CD8-positive, alpha-beta T cell (primary cell): ENCODE measurements at regions of chr6 and their contacts with region 1.

Region 1: GRCh38 chr6:3977875-3978711 is 100.8 kb downstream of the FAM217A start:
- DNase-seq: peak; percentile 10 to 78 (median 44)
- ATAC-seq: peak; percentile 99
- H3K4me3 ChIP-seq: peak overlapping the region in 1 of 2 experiments; percentile 6
- H3K4me3 Mint-ChIP-seq: peak overlapping the region; percentile 47
- H3K27ac ChIP-seq: no peak overlapping the region
- H3K27ac Mint-ChIP-seq: no peak overlapping the region
- H3K4me1 ChIP-seq: peaks cover 7% of the 10 kb centered on the region
- H3K4me1 Mint-ChIP-seq: peaks cover 11% of the 10 kb centered on the region
- H3K27me3 ChIP-seq: no peaks in the 10 kb centered on the region
- H3K27me3 Mint-ChIP-seq: no peaks in the 10 kb centered on the region
- CTCF ChIP-seq: peak; percentile 64

Region 2: GRCh38 chr6:3748208-3749066 is 229.7 kb before region 1 on chr6:
- CTCF ChIA-PET with region 1: interaction called, 38 read pairs
- POLR2A ChIA-PET with region 1: no interaction called
- intact Hi-C with region 1: no loop called
- DNase-seq: peak in 3 of 9 experiments; percentile 36 to 45 (median 37)
- ATAC-seq: no peak
- H3K4me3 ChIP-seq: no peak overlapping the region
- H3K4me3 Mint-ChIP-seq: no peak overlapping the region
- H3K27ac ChIP-seq: no peak overlapping the region
- H3K27ac Mint-ChIP-seq: no peak overlapping the region
- H3K4me1 ChIP-seq: peaks cover 4% of the 10 kb centered on the region
- H3K4me1 Mint-ChIP-seq: peaks cover 9% of the 10 kb centered on the region
- H3K27me3 ChIP-seq: peaks cover 11 to 21% of the 10 kb centered on the region in 2 experiments
- H3K27me3 Mint-ChIP-seq: peaks cover 32% of the 10 kb centered on the region
- CTCF ChIP-seq: peak; percentile 25

Region 3: DNA sequence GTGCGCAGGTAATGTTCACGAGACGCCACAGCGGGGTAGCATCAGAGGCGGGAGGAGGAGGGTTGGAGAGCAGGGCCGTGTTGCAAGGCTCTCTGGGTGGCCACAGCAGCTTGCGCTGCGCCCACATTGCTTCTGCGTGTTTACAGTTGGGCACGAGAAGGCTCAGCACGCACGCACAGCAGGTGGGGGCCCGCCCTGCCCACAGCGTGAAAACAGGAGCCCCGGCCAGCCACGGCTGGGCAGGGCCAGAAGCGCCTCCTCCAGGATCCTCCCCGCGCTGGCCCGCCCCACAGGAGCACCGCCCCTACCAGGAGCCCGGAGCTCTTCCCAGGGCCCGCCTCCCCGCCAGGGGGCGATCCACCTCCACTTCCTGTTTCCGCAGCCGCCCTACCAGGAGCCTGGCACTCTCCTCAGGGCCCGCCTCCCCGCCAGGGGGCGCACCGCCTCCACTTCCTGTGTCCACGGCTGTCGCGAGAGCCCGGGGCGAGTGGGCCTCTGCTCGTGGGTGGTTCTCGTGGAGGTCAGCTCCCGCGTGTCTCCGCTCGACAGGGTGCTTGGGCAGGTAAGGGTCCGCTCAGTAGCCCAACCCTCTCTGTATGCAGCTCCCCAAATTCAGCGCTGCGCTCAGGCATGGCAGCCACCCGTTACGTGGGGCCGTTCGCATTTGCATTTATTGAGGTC is 129.0 kb before region 1 on chr6 and contains the start of gene FAM50B:
- CTCF ChIA-PET with region 1: interaction called, 18 read pairs
- POLR2A ChIA-PET with region 1: no interaction called
- intact Hi-C with region 1: loop called (anchors 1 to 2 kb)
- DNase-seq: peak; percentile 81 to 94 (median 90)
- ATAC-seq: peak; percentile 95
- H3K4me3 ChIP-seq: peak within 1 kb of the TSS; percentile 54 to 63
- H3K4me3 Mint-ChIP-seq: peak within 1 kb of the TSS; percentile 80
- H3K27ac ChIP-seq: peak within 1 kb of the TSS; percentile 47 to 56
- H3K27ac Mint-ChIP-seq: peak within 1 kb of the TSS; percentile 84
- H3K4me1 ChIP-seq: peaks cover 6% of the 10 kb centered on the region
- H3K4me1 Mint-ChIP-seq: peaks cover 18% of the 10 kb centered on the region
- H3K27me3 ChIP-seq: no peaks in the 10 kb centered on the region
- H3K27me3 Mint-ChIP-seq: no peaks in the 10 kb centered on the region
- CTCF ChIP-seq: peak; percentile 75
- total RNA-seq, gene FAM50B: 0.97 to 1.1 TPM

Region 4: DNA sequence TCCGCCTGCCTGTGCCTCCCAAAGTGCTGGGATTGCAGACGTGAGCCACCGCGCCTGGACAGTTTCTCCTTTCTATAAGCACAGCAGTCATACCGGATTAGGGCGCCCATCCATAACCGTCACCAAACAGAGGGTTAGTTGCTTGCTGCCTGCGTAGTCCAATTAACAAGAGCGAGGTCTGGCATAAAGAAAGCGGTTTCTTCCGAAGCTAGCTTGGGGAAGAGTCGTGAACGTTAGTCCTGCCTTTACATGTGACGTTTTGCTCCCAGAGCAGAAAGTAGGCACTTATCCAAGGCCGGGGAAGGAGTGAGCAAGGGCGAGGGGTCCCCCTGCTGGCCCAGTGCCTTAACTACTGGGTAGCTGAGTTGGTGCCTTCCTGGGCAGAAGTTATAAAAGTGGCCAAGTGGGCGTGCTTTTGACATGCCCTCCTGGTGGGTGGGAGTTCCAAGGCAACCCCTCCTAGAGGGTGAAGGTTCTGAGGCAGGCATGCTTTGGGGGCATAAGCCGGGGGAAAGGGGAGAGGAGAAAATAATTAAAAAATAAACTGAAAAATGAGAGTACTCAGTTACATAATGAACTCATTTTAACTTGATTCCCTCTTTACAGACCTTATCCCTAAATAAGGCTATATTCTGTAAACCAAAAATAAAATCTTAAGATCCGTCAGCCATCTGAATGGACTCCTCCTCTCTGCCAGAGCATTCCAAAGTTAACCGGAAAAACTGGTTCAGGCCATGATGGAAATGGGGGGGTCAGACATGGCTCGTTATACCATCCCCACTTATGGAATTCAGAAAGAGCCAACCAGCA is 12.8 kb after region 1 on chr6:
- CTCF ChIA-PET with region 1: interaction called, 20 read pairs
- POLR2A ChIA-PET with region 1: no interaction called
- intact Hi-C with region 1: no loop called
- DNase-seq: peak; percentile 42 to 75 (median 71)
- ATAC-seq: peak; percentile 98
- H3K4me3 ChIP-seq: no peak overlapping the region
- H3K4me3 Mint-ChIP-seq: no peak overlapping the region
- H3K27ac ChIP-seq: no peak overlapping the region
- H3K27ac Mint-ChIP-seq: no peak overlapping the region
- H3K4me1 ChIP-seq: no peaks in the 10 kb centered on the region
- H3K4me1 Mint-ChIP-seq: peaks cover 18% of the 10 kb centered on the region
- H3K27me3 ChIP-seq: no peaks in the 10 kb centered on the region
- H3K27me3 Mint-ChIP-seq: no peaks in the 10 kb centered on the region
- CTCF ChIP-seq: peak; percentile 73

Region 5: GRCh38 chr6:4155848-4156466 is 177.9 kb after region 1 on chr6:
- CTCF ChIA-PET with region 1: interaction called, 13 read pairs
- POLR2A ChIA-PET with region 1: no interaction called
- intact Hi-C with region 1: no loop called
- DNase-seq: peak; percentile 53 to 88 (median 77)
- ATAC-seq: peak; percentile 99
- H3K4me3 ChIP-seq: no peak overlapping the region
- H3K4me3 Mint-ChIP-seq: no peak overlapping the region
- H3K27ac ChIP-seq: no peak overlapping the region
- H3K27ac Mint-ChIP-seq: no peak overlapping the region
- H3K4me1 ChIP-seq: no peaks in the 10 kb centered on the region
- H3K4me1 Mint-ChIP-seq: peaks cover 3% of the 10 kb centered on the region
- H3K27me3 ChIP-seq: no peaks in the 10 kb centered on the region
- H3K27me3 Mint-ChIP-seq: peaks cover 4% of the 10 kb centered on the region
- CTCF ChIP-seq: peak; percentile 92

Region 6: GRCh38 chr6:5333658-5334057 is 1355.6 kb after region 1 on chr6:
- CTCF ChIA-PET with region 1: no interaction called
- POLR2A ChIA-PET with region 1: no interaction called
- intact Hi-C with region 1: no loop called
- DNase-seq: no peak
- ATAC-seq: no peak
- H3K4me3 ChIP-seq: no peak overlapping the region
- H3K4me3 Mint-ChIP-seq: no peak overlapping the region
- H3K27ac ChIP-seq: no peak overlapping the region
- H3K27ac Mint-ChIP-seq: no peak overlapping the region
- H3K4me1 ChIP-seq: no peaks in the 10 kb centered on the region
- H3K4me1 Mint-ChIP-seq: peaks cover 42% of the 10 kb centered on the region
- H3K27me3 ChIP-seq: no peaks in the 10 kb centered on the region
- H3K27me3 Mint-ChIP-seq: no peaks in the 10 kb centered on the region
- CTCF ChIP-seq: no peak